ENCODE measurements at regions of chr15 and their contacts with region 1.

Region 1: GRCh38 chr15:56918046-56918938 is at the start of gene TCF12:
- DNase-seq: peak; percentile 97
- H3K4me3 Mint-ChIP-seq: peak within 1 kb of the TSS; percentile 98
- H3K27ac Mint-ChIP-seq: peak within 1 kb of the TSS; percentile 98
- H3K4me1 Mint-ChIP-seq: peaks cover 46% of the 10 kb centered on the region
- H3K27me3 Mint-ChIP-seq: no peaks in the 10 kb centered on the region
- CTCF ChIP-seq: peak; percentile 44
- total RNA-seq, gene TCF12: 115 and 127 TPM in 2 replicates

Region 2: GRCh38 chr15:56869573-56869972 is 48.7 kb before region 1 on chr15:
- CTCF ChIA-PET with region 1: no interaction called
- intact Hi-C with region 1: no loop called
- DNase-seq: peak; percentile 65
- H3K4me3 Mint-ChIP-seq: no peak overlapping the region
- H3K27ac Mint-ChIP-seq: no peak overlapping the region
- H3K4me1 Mint-ChIP-seq: peaks cover 33% of the 10 kb centered on the region
- H3K27me3 Mint-ChIP-seq: no peaks in the 10 kb centered on the region
- CTCF ChIP-seq: peak; percentile 46

Region 3: DNA sequence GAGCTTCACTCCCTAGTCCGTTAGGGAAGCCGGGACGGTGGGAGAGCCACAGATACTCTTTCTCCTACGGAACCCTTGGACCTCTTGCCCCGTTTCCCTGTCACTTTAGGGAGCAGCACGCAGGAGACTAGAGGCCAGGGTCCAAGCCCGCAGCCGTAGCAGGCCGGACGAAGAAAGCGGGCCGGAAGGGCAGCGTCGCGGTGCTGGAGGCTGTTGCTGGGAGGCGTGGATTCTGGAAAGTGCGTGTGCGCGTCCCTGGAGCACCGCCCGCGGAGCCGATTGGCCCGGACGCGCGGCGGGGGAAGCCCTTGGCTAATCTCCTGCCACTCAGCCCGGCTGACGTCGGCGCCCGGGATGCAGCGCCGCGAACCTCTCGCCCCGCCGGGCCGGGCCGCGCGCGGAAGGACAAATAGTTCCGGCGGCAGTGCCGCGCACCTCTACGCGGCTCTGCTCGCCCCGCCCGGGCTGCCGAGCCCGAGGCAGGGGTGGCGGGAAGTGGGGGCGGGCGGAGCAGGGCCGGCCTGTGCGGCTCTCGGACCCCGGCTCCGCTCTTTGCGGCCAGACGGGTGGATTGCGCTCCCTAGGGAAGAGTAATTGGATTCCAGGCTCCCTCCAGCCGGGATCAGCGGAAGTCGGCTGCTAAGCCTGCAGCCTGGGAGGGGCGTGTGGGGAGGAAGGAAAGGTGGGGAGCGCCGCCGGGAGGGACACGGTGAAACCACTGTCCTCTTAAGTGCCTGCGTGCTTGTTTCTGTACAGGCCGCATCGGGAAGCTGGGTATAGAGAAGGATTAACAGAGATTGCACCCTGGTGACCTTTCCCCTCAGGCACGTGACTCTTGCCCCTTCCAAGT is 31.1 kb before region 1 on chr15:
- CTCF ChIA-PET with region 1: interaction called, 3 read pairs
- intact Hi-C with region 1: loop called (anchors 1 kb)
- DNase-seq: peak; percentile 97
- H3K4me3 Mint-ChIP-seq: peak overlapping the region; percentile 80
- H3K27ac Mint-ChIP-seq: peak overlapping the region; percentile 81
- H3K4me1 Mint-ChIP-seq: peaks cover 20% of the 10 kb centered on the region
- H3K27me3 Mint-ChIP-seq: no peaks in the 10 kb centered on the region
- CTCF ChIP-seq: no peak

Region 4: GRCh38 chr15:56957812-56958406 is 39.6 kb after region 1 on chr15:
- CTCF ChIA-PET with region 1: no interaction called
- intact Hi-C with region 1: loop called (anchors 5 kb)
- DNase-seq: peak; percentile 37
- H3K4me3 Mint-ChIP-seq: peak overlapping the region; percentile 45
- H3K27ac Mint-ChIP-seq: peak overlapping the region; percentile 79
- H3K4me1 Mint-ChIP-seq: peaks cover 53% of the 10 kb centered on the region
- H3K27me3 Mint-ChIP-seq: no peaks in the 10 kb centered on the region
- CTCF ChIP-seq: no peak

Region 5: GRCh38 chr15:57138349-57138788 is 220.1 kb after region 1 on chr15:
- CTCF ChIA-PET with region 1: interaction called, 4 read pairs
- intact Hi-C with region 1: loop called (anchors 1 kb)
- DNase-seq: peak; percentile 59
- H3K4me3 Mint-ChIP-seq: no peak overlapping the region
- H3K27ac Mint-ChIP-seq: no peak overlapping the region
- H3K4me1 Mint-ChIP-seq: peaks cover 5% of the 10 kb centered on the region
- H3K27me3 Mint-ChIP-seq: no peaks in the 10 kb centered on the region
- CTCF ChIP-seq: peak; percentile 79

Region 6: DNA sequence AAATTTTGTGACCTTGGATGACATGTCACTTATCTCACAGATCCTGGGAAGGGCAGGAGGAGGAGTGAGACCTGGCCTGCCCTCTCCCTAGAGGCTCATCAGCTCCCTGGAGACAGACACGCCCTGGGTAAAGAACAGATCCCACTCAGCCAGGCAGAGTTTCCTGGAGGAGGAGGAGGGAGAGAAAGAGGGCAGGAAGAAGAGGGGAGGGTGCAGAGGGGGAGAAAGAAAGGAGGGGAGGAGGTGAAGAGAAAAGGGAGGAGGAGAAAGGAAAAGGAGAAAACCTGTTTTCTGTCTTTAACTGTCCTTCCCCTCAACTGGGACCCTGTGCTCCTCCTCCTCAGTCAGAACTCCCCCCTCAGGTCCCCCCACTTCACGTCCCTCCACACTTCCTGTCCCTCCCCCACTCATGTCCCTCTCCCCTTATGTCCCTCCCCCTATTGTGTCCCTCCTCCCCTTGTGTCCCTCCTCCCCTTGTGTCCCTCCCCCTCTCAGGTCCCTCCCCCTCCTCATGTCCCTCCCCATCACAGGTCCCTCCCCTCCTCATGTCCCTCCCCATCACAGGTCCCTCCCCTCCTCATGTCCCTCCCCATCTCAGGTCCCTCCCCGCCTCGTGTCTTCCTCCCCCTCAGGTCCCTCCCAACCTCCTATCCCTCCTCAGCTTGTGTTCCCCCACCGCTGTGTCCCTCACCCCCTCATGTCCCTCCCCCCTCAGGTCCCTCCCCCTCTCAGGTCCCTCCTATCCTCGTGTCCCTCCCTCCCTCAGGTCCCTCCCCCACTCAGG is 405.7 kb after region 1 on chr15:
- CTCF ChIA-PET with region 1: no interaction called
- intact Hi-C with region 1: no loop called
- DNase-seq: no peak
- H3K4me3 Mint-ChIP-seq: no peak overlapping the region
- H3K27ac Mint-ChIP-seq: no peak overlapping the region
- H3K4me1 Mint-ChIP-seq: peaks cover 8% of the 10 kb centered on the region
- H3K27me3 Mint-ChIP-seq: peaks cover 20% of the 10 kb centered on the region
- CTCF ChIP-seq: no peak

Measured in Calu3 (cell line).